Sciatic nerve (tissue), 2 donors: ENCODE measurements at regions of chr3 and their contacts with region 1.

Region 1: DNA sequence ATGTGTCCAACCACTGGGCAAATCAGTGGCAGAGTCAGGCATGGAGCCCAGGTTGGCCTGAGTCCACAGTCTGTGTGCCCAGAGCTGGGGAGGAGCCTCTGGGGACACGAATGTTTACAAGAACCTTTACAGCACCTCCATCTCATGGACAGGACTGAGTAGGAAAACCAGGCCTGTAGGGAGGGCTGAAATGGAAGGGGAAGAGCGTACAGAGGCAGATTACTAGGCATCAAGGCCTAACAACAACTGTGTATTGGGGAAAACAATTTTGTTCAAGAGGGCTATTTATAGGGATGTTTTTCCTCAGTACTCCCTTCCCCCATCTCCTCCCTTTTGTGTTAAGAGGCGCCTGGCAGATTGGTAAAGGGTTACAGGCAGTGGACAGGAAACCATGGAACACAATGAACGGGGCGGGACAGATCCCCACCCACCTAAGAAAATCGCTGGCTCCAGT is 15.1 kb upstream of the ARHGAP31 start:
- DNase-seq: no peak
- ATAC-seq: peak; percentile 73

Region 2: GRCh38 chr3:119401503-119402372 is 122.6 kb after region 1 on chr3:
- intact Hi-C with region 1: no loop called
- DNase-seq: no peak
- ATAC-seq: no peak

Region 3: GRCh38 chr3:119463171-119464169 is 184.3 kb after region 1 on chr3 and contains the start of gene TMEM39A:
- intact Hi-C with region 1: loop called (anchors 10 kb)
- DNase-seq: peak; percentile 100
- ATAC-seq: peak; percentile 99
- total RNA-seq, gene TMEM39A: 48.2 TPM

Region 4: DNA sequence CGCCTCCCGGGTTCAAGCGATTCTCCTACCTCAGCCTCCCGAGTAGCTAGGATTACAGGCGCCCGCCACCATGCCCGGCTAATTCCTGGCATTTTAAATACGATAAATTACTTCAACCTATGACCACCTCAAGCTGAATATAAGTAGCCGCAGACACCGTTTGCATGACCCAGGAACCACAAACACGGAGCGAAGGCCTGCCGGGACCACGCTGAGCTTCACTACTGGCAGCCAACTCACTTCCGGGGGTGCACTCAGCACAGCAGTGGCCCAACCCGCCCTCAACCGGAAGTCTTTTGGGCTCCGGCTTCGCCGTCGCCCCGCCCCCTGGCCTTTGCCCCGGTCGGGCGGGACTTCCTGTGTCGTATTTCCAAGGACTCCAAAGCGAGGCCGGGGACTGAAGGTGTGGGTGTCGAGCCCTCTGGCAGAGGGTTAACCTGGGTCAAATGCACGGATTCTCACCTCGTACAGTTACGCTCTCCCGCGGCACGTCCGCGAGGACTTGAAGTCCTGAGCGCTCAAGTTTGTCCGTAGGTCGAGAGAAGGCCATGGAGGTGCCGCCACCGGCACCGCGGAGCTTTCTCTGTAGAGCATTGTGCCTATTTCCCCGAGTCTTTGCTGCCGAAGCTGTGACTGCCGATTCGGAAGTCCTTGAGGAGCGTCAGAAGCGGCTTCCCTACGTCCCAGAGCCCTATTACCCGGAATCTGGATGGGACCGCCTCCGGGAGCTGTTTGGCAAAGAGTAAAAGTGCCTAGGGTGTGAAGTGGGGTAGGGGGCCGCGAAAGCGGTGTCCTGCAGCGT is 219.3 kb after region 1 on chr3 and contains the start of gene TIMMDC1:
- intact Hi-C with region 1: no loop called
- DNase-seq: peak; percentile 97
- ATAC-seq: peak; percentile 100
- total RNA-seq, gene TIMMDC1: 92.7 TPM